MCF 10A (cell line): ENCODE measurements at regions of chr5 and their contacts with region 1.

Region 1: DNA sequence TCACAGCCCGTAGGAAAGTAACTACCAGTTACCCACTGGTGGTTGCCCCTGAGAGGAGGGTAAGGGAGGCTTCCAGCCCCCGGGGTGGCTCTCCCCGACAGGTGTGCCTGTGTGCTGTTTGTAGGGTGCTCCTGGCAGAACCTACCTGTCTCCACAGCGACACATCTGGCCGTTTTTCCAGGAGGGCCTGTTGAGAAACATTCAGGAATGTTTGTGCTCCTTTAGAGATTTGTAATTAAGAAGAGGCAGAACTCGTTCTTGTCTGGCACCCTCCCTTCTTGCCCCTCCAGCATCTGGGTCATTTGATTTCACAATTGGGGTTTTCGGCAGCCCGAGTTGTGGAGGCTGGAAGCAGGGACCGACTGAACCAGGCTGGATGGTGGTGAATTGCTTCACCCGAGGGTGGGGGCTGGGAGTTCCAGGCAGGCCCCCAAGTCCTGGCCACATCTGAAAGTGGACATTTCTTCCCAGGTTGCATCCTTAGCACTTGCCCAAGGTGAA is 74.2 kb downstream of the WWC1 start:
- DNase-seq: peak; percentile 92
- H3K4me3 Mint-ChIP-seq: peak overlapping the region; percentile 20
- H3K27ac Mint-ChIP-seq: peak overlapping the region; percentile 35
- H3K4me1 Mint-ChIP-seq: peaks cover 32% of the 10 kb centered on the region
- H3K27me3 Mint-ChIP-seq: no peaks in the 10 kb centered on the region
- CTCF ChIP-seq: peak; percentile 52

Region 2: GRCh38 chr5:167759057-167759821 is 606.4 kb before region 1 on chr5:
- CTCF ChIA-PET with region 1: no interaction called
- POLR2A ChIA-PET with region 1: no interaction called
- intact Hi-C with region 1: no loop called
- DNase-seq: peak; percentile 99
- H3K4me3 Mint-ChIP-seq: no peak overlapping the region
- H3K27ac Mint-ChIP-seq: peak overlapping the region; percentile 26
- H3K4me1 Mint-ChIP-seq: peaks cover 20% of the 10 kb centered on the region
- H3K27me3 Mint-ChIP-seq: no peaks in the 10 kb centered on the region
- CTCF ChIP-seq: no peak

Region 3: GRCh38 chr5:168317521-168318147 is 48.0 kb before region 1 on chr5:
- CTCF ChIA-PET with region 1: interaction called, 14 read pairs
- POLR2A ChIA-PET with region 1: interaction called, 7 read pairs
- intact Hi-C with region 1: no loop called
- DNase-seq: peak; percentile 93
- H3K4me3 Mint-ChIP-seq: no peak overlapping the region
- H3K27ac Mint-ChIP-seq: peak overlapping the region; percentile 20
- H3K4me1 Mint-ChIP-seq: peaks cover 38% of the 10 kb centered on the region
- H3K27me3 Mint-ChIP-seq: no peaks in the 10 kb centered on the region
- CTCF ChIP-seq: no peak

Region 4: DNA sequence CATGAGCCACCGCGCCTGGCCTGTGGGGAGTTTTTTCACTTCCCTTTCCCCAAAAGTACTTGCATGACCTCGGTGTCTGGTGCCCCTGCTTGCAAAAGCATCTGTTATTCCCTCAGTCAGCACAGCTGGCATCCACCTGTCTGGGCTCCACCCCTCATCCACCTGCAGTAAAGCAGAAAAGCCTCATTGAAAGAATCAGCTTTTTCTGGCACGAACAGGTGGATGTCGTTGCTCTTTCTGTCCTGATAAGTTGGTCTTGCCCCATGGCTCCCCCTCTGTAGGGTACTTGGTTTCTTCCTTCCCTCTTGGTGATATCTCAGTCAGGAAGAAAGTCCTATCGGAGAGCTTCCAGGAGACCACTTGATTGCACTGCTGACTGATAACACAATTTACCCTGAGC is 36.8 kb before region 1 on chr5:
- CTCF ChIA-PET with region 1: interaction called, 20 read pairs
- POLR2A ChIA-PET with region 1: interaction called, 27 read pairs
- intact Hi-C with region 1: no loop called
- DNase-seq: no peak
- H3K4me3 Mint-ChIP-seq: no peak overlapping the region
- H3K27ac Mint-ChIP-seq: no peak overlapping the region
- H3K4me1 Mint-ChIP-seq: peaks cover 29% of the 10 kb centered on the region
- H3K27me3 Mint-ChIP-seq: no peaks in the 10 kb centered on the region
- CTCF ChIP-seq: no peak

Region 5: GRCh38 chr5:168350315-168350714 is 15.3 kb before region 1 on chr5:
- CTCF ChIA-PET with region 1: interaction called, 11 read pairs
- POLR2A ChIA-PET with region 1: interaction called, 4 read pairs
- intact Hi-C with region 1: no loop called
- DNase-seq: no peak
- H3K4me3 Mint-ChIP-seq: no peak overlapping the region
- H3K27ac Mint-ChIP-seq: no peak overlapping the region
- H3K4me1 Mint-ChIP-seq: peaks cover 18% of the 10 kb centered on the region
- H3K27me3 Mint-ChIP-seq: no peaks in the 10 kb centered on the region
- CTCF ChIP-seq: no peak

Region 6: GRCh38 chr5:168378741-168379140 is 13.1 kb after region 1 on chr5:
- CTCF ChIA-PET with region 1: interaction called, 18 read pairs
- POLR2A ChIA-PET with region 1: interaction called, 5 read pairs
- intact Hi-C with region 1: no loop called
- DNase-seq: no peak
- H3K4me3 Mint-ChIP-seq: no peak overlapping the region
- H3K27ac Mint-ChIP-seq: no peak overlapping the region
- H3K4me1 Mint-ChIP-seq: peaks cover 9% of the 10 kb centered on the region
- H3K27me3 Mint-ChIP-seq: no peaks in the 10 kb centered on the region
- CTCF ChIP-seq: no peak

Region 7: GRCh38 chr5:168409580-168410458 is 44.2 kb after region 1 on chr5:
- CTCF ChIA-PET with region 1: interaction called, 9 read pairs
- POLR2A ChIA-PET with region 1: interaction called, 26 read pairs
- intact Hi-C with region 1: loop called (anchors 5 kb)
- DNase-seq: peak; percentile 83
- H3K4me3 Mint-ChIP-seq: peak overlapping the region; percentile 28
- H3K27ac Mint-ChIP-seq: peak overlapping the region; percentile 78
- H3K4me1 Mint-ChIP-seq: peaks cover 49% of the 10 kb centered on the region
- H3K27me3 Mint-ChIP-seq: no peaks in the 10 kb centered on the region
- CTCF ChIP-seq: no peak

Region 8: DNA sequence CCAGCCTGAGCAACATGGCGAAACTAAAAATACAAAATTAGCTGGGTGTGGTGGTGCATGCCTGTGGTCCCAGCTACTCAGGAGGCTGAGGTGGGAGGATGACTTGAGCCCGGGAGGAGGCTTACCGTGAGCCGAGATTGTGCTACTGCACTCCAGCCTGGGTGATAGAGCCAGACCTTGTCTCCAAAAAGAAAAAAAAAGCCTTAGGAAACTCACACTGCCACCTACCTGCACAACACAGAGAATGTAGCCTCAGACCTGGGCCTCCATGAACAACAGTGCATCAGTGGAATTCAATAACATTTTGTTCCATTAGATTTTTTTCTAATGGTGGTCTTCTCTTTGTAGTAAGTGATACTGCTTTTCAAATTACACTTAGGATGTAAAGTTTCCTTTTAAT is 56.8 kb after region 1 on chr5:
- CTCF ChIA-PET with region 1: interaction called, 15 read pairs
- POLR2A ChIA-PET with region 1: interaction called, 3 read pairs
- intact Hi-C with region 1: no loop called
- DNase-seq: peak; percentile 61
- H3K4me3 Mint-ChIP-seq: no peak overlapping the region
- H3K27ac Mint-ChIP-seq: no peak overlapping the region
- H3K4me1 Mint-ChIP-seq: no peaks in the 10 kb centered on the region
- H3K27me3 Mint-ChIP-seq: no peaks in the 10 kb centered on the region
- CTCF ChIP-seq: peak; percentile 55